ENCODE measurements at regions of chr1 and their contacts with region 1.

Region 1: GRCh38 chr1:90729504-90730242 is 12.6 kb upstream of the BARHL2 start:
- DNase-seq: no peak
- H3K4me3 ChIP-seq: no peak overlapping the region
- H3K27ac ChIP-seq: no peak overlapping the region
- H3K4me1 ChIP-seq: peaks cover 0 to 46% (median 40%) of the 10 kb centered on the region in 4 donors
- H3K27me3 ChIP-seq: peaks cover 62 to 99% (median 83%) of the 10 kb centered on the region in 3 donors
- CTCF ChIP-seq: no peak
- EP300 ChIP-seq: no peak
- POLR2A ChIP-seq: no peak

Region 2: DNA sequence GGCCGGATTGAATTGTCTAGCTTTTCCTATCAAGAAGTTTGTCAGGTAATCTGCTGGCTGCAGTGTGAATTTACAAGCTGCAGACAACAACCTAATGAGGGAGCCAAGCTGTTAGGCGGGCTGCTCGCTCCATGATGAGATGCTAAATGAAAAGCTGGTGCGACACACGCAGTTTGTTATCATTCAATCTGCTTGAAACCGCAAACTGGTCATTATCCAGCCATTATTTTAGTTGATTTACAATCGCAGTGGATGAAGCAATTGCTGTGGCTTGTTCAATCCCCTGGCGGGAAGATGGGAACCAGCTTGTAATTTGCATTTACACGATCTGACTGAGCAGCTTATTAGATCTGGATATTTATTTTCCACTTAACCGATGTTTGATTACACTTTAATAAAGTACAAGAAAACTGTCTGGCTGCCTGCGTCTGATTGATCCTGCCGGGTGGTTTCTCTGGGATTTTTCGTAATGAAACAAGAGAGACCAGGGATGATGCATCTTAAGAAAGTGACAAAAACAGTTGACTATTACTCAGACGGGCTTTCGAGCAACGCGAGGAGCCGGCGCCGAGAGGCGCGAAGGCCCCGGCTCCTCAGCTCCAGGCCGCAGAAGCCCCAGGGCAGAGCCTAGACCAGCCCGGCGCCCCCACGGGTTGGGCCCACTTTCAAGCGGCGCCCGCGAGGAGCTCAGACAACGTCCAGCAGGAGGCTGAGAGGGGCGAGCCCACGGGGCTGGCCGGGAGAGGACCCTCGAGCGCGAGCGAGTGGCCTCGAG is 105.4 kb after region 1 on chr1:
- intact Hi-C with region 1: loop called (anchors 5 kb)
- DNase-seq: no peak
- H3K4me3 ChIP-seq: peak overlapping the region in 3 of 4 donors; percentile 29 to 43 (median 40)
- H3K27ac ChIP-seq: no peak overlapping the region
- H3K4me1 ChIP-seq: peaks cover 0 to 21% (median 16%) of the 10 kb centered on the region in 4 donors
- H3K27me3 ChIP-seq: peaks cover 22 to 92% (median 64%) of the 10 kb centered on the region in 3 donors
- CTCF ChIP-seq: no peak
- EP300 ChIP-seq: no peak
- POLR2A ChIP-seq: no peak